Pancreas (tissue), 10 donors: ENCODE measurements at regions of chr12 and their contacts with region 1.

Region 1: DNA sequence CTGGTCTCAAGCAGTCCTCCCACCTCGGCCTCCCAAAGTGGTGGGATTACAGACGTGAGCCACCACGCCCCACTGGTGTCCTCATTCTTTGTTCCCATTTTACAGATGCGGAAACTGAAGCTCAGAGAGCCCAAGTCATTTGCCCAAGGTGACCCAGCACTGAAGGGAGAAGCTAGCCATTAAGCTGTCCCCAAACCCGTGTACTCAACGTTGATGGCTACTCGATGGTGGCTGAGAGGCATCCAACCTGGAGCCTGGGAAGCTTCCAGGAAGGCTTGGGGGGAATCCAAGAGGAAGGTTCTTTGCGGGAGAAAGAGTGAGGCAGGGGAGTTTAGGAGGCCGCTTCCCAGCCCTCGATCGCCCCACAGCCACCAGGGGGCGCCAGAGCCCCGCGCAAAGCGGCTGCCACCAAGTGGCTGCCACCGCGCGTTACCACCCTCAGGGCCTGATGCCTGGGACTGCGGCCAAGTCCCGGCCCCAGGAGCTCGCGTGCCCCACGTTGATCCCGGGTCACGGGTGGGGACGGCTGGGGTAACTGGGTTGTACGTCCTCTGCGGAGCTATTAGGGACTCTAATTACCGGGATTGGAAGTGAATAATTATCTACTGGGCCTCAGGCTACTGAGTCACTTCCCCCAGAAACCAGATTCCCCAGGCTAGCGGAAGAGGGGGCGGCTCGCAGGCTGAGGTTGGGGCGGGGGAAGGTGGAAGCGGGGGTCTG is 8.8 kb upstream of the SH2B3 start:
- DNase-seq: peak; percentile 75 to 99 (median 90)
- ATAC-seq: peak; percentile 95 to 97 (median 95)
- H3K4me3 ChIP-seq: peak overlapping the region in 1 of 4 donors; percentile 18
- H3K27ac ChIP-seq: peak overlapping the region in 1 of 4 donors; percentile 1
- H3K4me1 ChIP-seq: peaks cover 0 to 3% (median 0%) of the 10 kb centered on the region in 3 donors
- H3K27me3 ChIP-seq: no peaks in the 10 kb centered on the region
- CTCF ChIP-seq: peak; percentile 97 to 99 (median 99)

Region 2: GRCh38 chr12:111086947-111087700 is 309.8 kb before region 1 on chr12:
- intact Hi-C with region 1: no loop called
- DNase-seq: no peak
- ATAC-seq: no peak
- H3K4me3 ChIP-seq: no peak overlapping the region
- H3K27ac ChIP-seq: no peak overlapping the region
- H3K4me1 ChIP-seq: no peaks in the 10 kb centered on the region
- H3K27me3 ChIP-seq: no peaks in the 10 kb centered on the region
- CTCF ChIP-seq: no peak

Region 3: GRCh38 chr12:111451649-111452129 is 54.8 kb after region 1 on chr12:
- intact Hi-C with region 1: loop called in 2 of 3 experiments (anchors 2 to 5 kb)
- DNase-seq: peak in 1 of 6 donors; percentile 10
- ATAC-seq: peak in 3 of 4 donors; percentile 45 to 66 (median 48)
- H3K4me3 ChIP-seq: no peak overlapping the region
- H3K27ac ChIP-seq: no peak overlapping the region
- H3K4me1 ChIP-seq: peaks cover 1 to 6% (median 5%) of the 10 kb centered on the region in 3 donors
- H3K27me3 ChIP-seq: no peaks in the 10 kb centered on the region
- CTCF ChIP-seq: peak; percentile 61 to 69 (median 63)

Region 4: GRCh38 chr12:111488271-111488670 is 91.4 kb after region 1 on chr12:
- intact Hi-C with region 1: no loop called
- DNase-seq: no peak
- ATAC-seq: peak in 1 of 4 donors; percentile 52
- H3K4me3 ChIP-seq: no peak overlapping the region
- H3K27ac ChIP-seq: no peak overlapping the region
- H3K4me1 ChIP-seq: no peaks in the 10 kb centered on the region
- H3K27me3 ChIP-seq: no peaks in the 10 kb centered on the region
- CTCF ChIP-seq: no peak

Region 5: GRCh38 chr12:111529424-111530368 is 132.8 kb after region 1 on chr12:
- intact Hi-C with region 1: loop called in 1 of 3 experiments (anchors 10 kb)
- DNase-seq: peak in 5 of 6 donors; percentile 21 to 57 (median 22)
- ATAC-seq: peak in 3 of 4 donors; percentile 82 to 87 (median 85)
- H3K4me3 ChIP-seq: no peak overlapping the region
- H3K27ac ChIP-seq: no peak overlapping the region
- H3K4me1 ChIP-seq: no peaks in the 10 kb centered on the region
- H3K27me3 ChIP-seq: no peaks in the 10 kb centered on the region
- CTCF ChIP-seq: peak; percentile 34 to 48 (median 46)